CD4-positive, alpha-beta T cell (primary cell): ENCODE measurements at regions of chr2 and their contacts with region 1.

Region 1: GRCh38 chr2:231056453-231057424 is at the start of gene PSMD1:
- DNase-seq: peak; percentile 88 to 97 (median 93)
- ATAC-seq: peak; percentile 81
- H3K4me3 ChIP-seq: peak within 1 kb of the TSS; percentile 95
- H3K4me3 Mint-ChIP-seq: peak within 1 kb of the TSS; percentile 100
- H3K27ac ChIP-seq: peak within 1 kb of the TSS; percentile 80 to 83
- H3K27ac Mint-ChIP-seq: peak within 1 kb of the TSS; percentile 98
- H3K4me1 ChIP-seq: peaks cover 34% of the 10 kb centered on the region
- H3K4me1 Mint-ChIP-seq: peaks cover 60% of the 10 kb centered on the region
- H3K27me3 ChIP-seq: no peaks in the 10 kb centered on the region
- H3K27me3 Mint-ChIP-seq: peaks cover 12% of the 10 kb centered on the region
- CTCF ChIP-seq: peak; percentile 94
- total RNA-seq, gene PSMD1: 27.9 to 31.3 TPM

Region 2: DNA sequence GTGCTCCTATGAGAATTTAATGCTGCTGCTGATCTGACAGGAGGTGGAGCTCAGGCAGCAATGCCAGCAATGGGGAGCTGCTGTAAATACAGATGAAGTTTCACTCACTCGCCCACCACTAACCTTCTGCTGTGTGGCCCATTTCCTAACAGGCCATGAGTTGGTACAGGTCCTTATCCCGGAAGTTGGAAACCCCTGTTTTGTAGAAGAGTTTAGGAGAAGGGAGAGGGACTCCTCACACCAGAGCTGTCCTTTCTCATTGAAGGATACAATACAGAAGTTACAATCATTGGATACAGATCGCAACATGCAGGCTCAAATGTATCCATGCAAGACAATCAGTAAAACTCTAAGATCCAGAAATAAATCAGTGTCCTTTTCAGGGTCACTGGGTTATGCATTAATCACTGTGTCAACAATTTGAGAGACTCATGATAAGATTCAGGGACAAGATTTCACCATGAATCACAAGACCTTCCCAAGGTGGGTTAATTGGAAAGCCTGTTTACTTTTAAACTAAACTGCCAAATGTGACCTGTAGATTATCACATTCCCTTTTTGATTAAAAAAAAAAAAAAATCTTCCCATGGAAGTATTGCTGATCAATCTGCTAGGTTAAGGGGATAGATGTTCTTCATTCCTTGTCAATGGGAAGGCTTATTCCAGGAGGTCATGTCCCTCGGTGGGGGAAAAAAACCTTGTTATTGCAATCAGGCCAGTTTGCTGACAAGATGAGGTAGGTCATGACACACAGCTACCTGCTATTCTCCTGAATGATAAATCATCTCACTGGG is 543.6 kb before region 1 on chr2:
- CTCF ChIA-PET with region 1: no interaction called
- POLR2A ChIA-PET with region 1: no interaction called
- intact Hi-C with region 1: no loop called
- DNase-seq: no peak
- ATAC-seq: no peak
- H3K4me3 ChIP-seq: no peak overlapping the region
- H3K4me3 Mint-ChIP-seq: no peak overlapping the region
- H3K27ac ChIP-seq: no peak overlapping the region
- H3K27ac Mint-ChIP-seq: no peak overlapping the region
- H3K4me1 ChIP-seq: no peaks in the 10 kb centered on the region
- H3K4me1 Mint-ChIP-seq: no peaks in the 10 kb centered on the region
- H3K27me3 ChIP-seq: no peaks in the 10 kb centered on the region
- H3K27me3 Mint-ChIP-seq: no peaks in the 10 kb centered on the region
- CTCF ChIP-seq: no peak

Region 3: DNA sequence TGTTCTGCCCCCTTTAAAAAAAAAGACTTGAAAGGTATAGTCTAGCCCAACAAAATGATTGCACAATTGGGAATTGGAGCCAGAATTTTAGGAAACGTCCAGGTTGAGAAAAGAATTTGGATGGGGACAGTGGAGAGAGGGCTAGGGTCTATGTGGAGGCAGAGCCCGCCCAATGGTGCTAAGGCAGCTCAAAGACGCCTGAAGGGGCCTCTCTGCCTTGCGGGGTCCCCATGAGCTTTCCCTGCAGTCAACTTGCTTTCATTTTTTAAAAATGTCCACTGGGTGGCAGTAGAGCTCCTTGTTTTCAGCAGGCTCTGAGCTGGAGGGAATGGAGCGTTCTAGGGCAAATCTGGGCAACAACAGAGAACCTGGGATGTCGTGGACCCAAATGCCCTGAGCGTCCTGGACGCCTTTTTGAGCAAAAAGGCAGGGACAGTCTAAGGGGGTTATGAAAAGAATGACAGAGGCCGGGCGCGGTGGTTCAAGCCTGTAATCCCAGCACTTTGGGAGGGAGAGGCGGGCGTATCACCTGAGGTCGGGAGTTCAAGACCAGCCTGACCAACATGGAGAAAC is 232.2 kb before region 1 on chr2:
- CTCF ChIA-PET with region 1: interaction called, 8 read pairs
- POLR2A ChIA-PET with region 1: no interaction called
- intact Hi-C with region 1: loop called in 1 of 2 experiments (anchors 2 kb)
- DNase-seq: peak in 12 of 14 experiments; percentile 13 to 88 (median 38)
- ATAC-seq: peak; percentile 85
- H3K4me3 ChIP-seq: no peak overlapping the region
- H3K4me3 Mint-ChIP-seq: peak overlapping the region; percentile 49
- H3K27ac ChIP-seq: no peak overlapping the region
- H3K27ac Mint-ChIP-seq: peak overlapping the region; percentile 18
- H3K4me1 ChIP-seq: peaks cover 24% of the 10 kb centered on the region
- H3K4me1 Mint-ChIP-seq: peaks cover 10% of the 10 kb centered on the region
- H3K27me3 ChIP-seq: peaks cover 27 to 28% of the 10 kb centered on the region in 2 experiments
- H3K27me3 Mint-ChIP-seq: peaks cover 35% of the 10 kb centered on the region
- CTCF ChIP-seq: peak; percentile 76

Region 4: GRCh38 chr2:230902180-230902899 is 154.4 kb before region 1 on chr2:
- CTCF ChIA-PET with region 1: no interaction called
- POLR2A ChIA-PET with region 1: no interaction called
- intact Hi-C with region 1: loop called (anchors 5 to 10 kb)
- DNase-seq: peak; percentile 29 to 82 (median 42)
- ATAC-seq: peak; percentile 19
- H3K4me3 ChIP-seq: no peak overlapping the region
- H3K4me3 Mint-ChIP-seq: no peak overlapping the region
- H3K27ac ChIP-seq: no peak overlapping the region
- H3K27ac Mint-ChIP-seq: no peak overlapping the region
- H3K4me1 ChIP-seq: peaks cover 27% of the 10 kb centered on the region
- H3K4me1 Mint-ChIP-seq: peaks cover 33% of the 10 kb centered on the region
- H3K27me3 ChIP-seq: no peaks in the 10 kb centered on the region
- H3K27me3 Mint-ChIP-seq: no peaks in the 10 kb centered on the region
- CTCF ChIP-seq: peak; percentile 70

Region 5: GRCh38 chr2:230913406-230914143 is 143.2 kb before region 1 on chr2:
- CTCF ChIA-PET with region 1: no interaction called
- POLR2A ChIA-PET with region 1: no interaction called
- intact Hi-C with region 1: loop called (anchors 5 to 10 kb)
- DNase-seq: peak in 6 of 14 experiments; percentile 23 to 62 (median 40)
- ATAC-seq: peak; percentile 60
- H3K4me3 ChIP-seq: no peak overlapping the region
- H3K4me3 Mint-ChIP-seq: no peak overlapping the region
- H3K27ac ChIP-seq: no peak overlapping the region
- H3K27ac Mint-ChIP-seq: no peak overlapping the region
- H3K4me1 ChIP-seq: peaks cover 7% of the 10 kb centered on the region
- H3K4me1 Mint-ChIP-seq: peaks cover 23% of the 10 kb centered on the region
- H3K27me3 ChIP-seq: no peaks in the 10 kb centered on the region
- H3K27me3 Mint-ChIP-seq: no peaks in the 10 kb centered on the region
- CTCF ChIP-seq: peak; percentile 48

Region 6: DNA sequence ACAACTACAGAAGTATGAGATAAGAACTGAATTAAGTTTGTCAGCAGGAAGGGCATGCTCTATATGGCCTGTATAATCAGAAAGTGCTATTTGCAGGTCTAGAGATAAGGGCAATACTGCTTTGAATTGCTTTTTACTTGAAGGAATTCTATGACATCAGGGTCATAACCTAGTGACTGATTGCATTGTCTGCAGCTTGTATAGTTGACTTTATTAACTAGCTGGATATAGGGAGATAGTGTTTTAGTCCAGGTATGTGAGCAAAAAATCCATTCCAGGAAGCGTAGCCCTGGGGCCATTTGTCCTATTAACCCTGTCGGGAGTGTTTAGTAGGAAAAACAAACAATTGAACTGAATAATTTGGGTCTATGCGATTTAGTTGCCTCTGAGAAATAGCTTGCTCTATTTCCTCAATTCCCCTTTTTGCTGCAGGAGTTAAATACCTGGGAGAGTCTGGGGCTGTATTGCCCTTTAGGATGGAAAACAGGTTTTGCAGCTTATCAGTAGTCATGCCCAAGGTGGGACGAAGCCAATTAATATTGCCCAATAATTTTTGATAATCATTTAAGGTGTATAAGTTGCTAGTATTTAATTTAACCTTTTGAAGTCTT is 38.1 kb after region 1 on chr2:
- CTCF ChIA-PET with region 1: no interaction called
- POLR2A ChIA-PET with region 1: no interaction called
- intact Hi-C with region 1: no loop called
- DNase-seq: no peak
- ATAC-seq: no peak
- H3K4me3 ChIP-seq: no peak overlapping the region
- H3K4me3 Mint-ChIP-seq: no peak overlapping the region
- H3K27ac ChIP-seq: no peak overlapping the region
- H3K27ac Mint-ChIP-seq: no peak overlapping the region
- H3K4me1 ChIP-seq: no peaks in the 10 kb centered on the region
- H3K4me1 Mint-ChIP-seq: no peaks in the 10 kb centered on the region
- H3K27me3 ChIP-seq: no peaks in the 10 kb centered on the region
- H3K27me3 Mint-ChIP-seq: no peaks in the 10 kb centered on the region
- CTCF ChIP-seq: no peak

Region 7: GRCh38 chr2:231181860-231182512 is 125.2 kb after region 1 on chr2:
- CTCF ChIA-PET with region 1: no interaction called
- POLR2A ChIA-PET with region 1: no interaction called
- intact Hi-C with region 1: no loop called
- DNase-seq: peak in 2 of 14 experiments; percentile 73 to 82
- ATAC-seq: no peak
- H3K4me3 ChIP-seq: no peak overlapping the region
- H3K4me3 Mint-ChIP-seq: no peak overlapping the region
- H3K27ac ChIP-seq: no peak overlapping the region
- H3K27ac Mint-ChIP-seq: no peak overlapping the region
- H3K4me1 ChIP-seq: no peaks in the 10 kb centered on the region
- H3K4me1 Mint-ChIP-seq: peaks cover 6% of the 10 kb centered on the region
- H3K27me3 ChIP-seq: no peaks in the 10 kb centered on the region
- H3K27me3 Mint-ChIP-seq: no peaks in the 10 kb centered on the region
- CTCF ChIP-seq: no peak

Region 8: GRCh38 chr2:231241755-231242507 is 185.2 kb after region 1 on chr2:
- CTCF ChIA-PET with region 1: no interaction called
- POLR2A ChIA-PET with region 1: no interaction called
- intact Hi-C with region 1: no loop called
- DNase-seq: no peak
- ATAC-seq: no peak
- H3K4me3 ChIP-seq: no peak overlapping the region
- H3K4me3 Mint-ChIP-seq: no peak overlapping the region
- H3K27ac ChIP-seq: no peak overlapping the region
- H3K27ac Mint-ChIP-seq: no peak overlapping the region
- H3K4me1 ChIP-seq: no peaks in the 10 kb centered on the region
- H3K4me1 Mint-ChIP-seq: no peaks in the 10 kb centered on the region
- H3K27me3 ChIP-seq: no peaks in the 10 kb centered on the region
- H3K27me3 Mint-ChIP-seq: no peaks in the 10 kb centered on the region
- CTCF ChIP-seq: no peak

Region 9: GRCh38 chr2:231514103-231514950 is 457.6 kb after region 1 on chr2:
- CTCF ChIA-PET with region 1: no interaction called
- POLR2A ChIA-PET with region 1: no interaction called
- intact Hi-C with region 1: loop called in 1 of 2 experiments (anchors 5 kb)
- DNase-seq: peak; percentile 96 to 99 (median 98)
- ATAC-seq: peak; percentile 96
- H3K4me3 ChIP-seq: peak overlapping the region; percentile 78
- H3K4me3 Mint-ChIP-seq: peak overlapping the region; percentile 91
- H3K27ac ChIP-seq: peak overlapping the region; percentile 87 to 95
- H3K27ac Mint-ChIP-seq: peak overlapping the region; percentile 94
- H3K4me1 ChIP-seq: peaks cover 12% of the 10 kb centered on the region
- H3K4me1 Mint-ChIP-seq: peaks cover 24% of the 10 kb centered on the region
- H3K27me3 ChIP-seq: no peaks in the 10 kb centered on the region
- H3K27me3 Mint-ChIP-seq: no peaks in the 10 kb centered on the region
- CTCF ChIP-seq: no peak

Region 10: GRCh38 chr2:231662028-231662810 is 605.5 kb after region 1 on chr2:
- CTCF ChIA-PET with region 1: no interaction called
- POLR2A ChIA-PET with region 1: no interaction called
- intact Hi-C with region 1: loop called in 1 of 2 experiments (anchors 10 kb)
- DNase-seq: peak; percentile 92 to 99 (median 97)
- ATAC-seq: peak; percentile 89
- H3K4me3 ChIP-seq: peak overlapping the region; percentile 57
- H3K4me3 Mint-ChIP-seq: peak overlapping the region; percentile 73
- H3K27ac ChIP-seq: peak overlapping the region; percentile 80 to 96
- H3K27ac Mint-ChIP-seq: peak overlapping the region; percentile 94
- H3K4me1 ChIP-seq: peaks cover 35% of the 10 kb centered on the region
- H3K4me1 Mint-ChIP-seq: peaks cover 17% of the 10 kb centered on the region
- H3K27me3 ChIP-seq: no peaks in the 10 kb centered on the region
- H3K27me3 Mint-ChIP-seq: no peaks in the 10 kb centered on the region
- CTCF ChIP-seq: no peak